ENCODE measurements at regions of chr6 and their contacts with region 1.

Region 1: DNA sequence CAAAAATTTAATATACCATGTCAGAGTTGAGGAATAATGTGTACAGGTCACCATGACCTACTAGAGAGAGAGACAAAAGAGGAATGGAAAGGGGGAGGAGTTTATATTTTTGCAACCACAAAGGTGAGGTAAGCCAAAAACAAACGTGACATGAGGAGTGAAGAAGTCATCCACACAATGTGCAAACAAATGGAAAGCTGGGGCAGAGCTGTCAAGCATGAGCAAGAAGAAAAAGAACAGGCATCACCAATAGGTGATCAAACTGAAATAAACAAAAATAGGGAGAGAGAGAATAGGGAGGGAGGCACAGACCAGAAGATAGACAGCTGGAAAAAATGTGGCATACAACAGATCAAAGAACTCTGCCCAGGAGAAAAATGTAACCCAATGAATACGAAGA is 15.5 kb downstream of the RARS2 start:
- DNase-seq: no peak
- H3K4me3 ChIP-seq: no peak overlapping the region
- H3K27ac ChIP-seq: no peak overlapping the region
- H3K27me3 ChIP-seq: no peaks in the 10 kb centered on the region
- CTCF ChIP-seq: no peak

Region 2: GRCh38 chr6:87483929-87484328 is 90.4 kb before region 1 on chr6:
- CTCF ChIA-PET with region 1: no interaction called
- POLR2A ChIA-PET with region 1: no interaction called
- DNase-seq: no peak
- H3K4me3 ChIP-seq: no peak overlapping the region
- H3K27ac ChIP-seq: no peak overlapping the region
- H3K27me3 ChIP-seq: no peaks in the 10 kb centered on the region
- CTCF ChIP-seq: no peak

Region 3: GRCh38 chr6:87551799-87552198 is 22.5 kb before region 1 on chr6:
- CTCF ChIA-PET with region 1: no interaction called
- POLR2A ChIA-PET with region 1: no interaction called
- DNase-seq: no peak
- H3K4me3 ChIP-seq: no peak overlapping the region
- H3K27ac ChIP-seq: no peak overlapping the region
- H3K27me3 ChIP-seq: no peaks in the 10 kb centered on the region
- CTCF ChIP-seq: no peak

Region 4: DNA sequence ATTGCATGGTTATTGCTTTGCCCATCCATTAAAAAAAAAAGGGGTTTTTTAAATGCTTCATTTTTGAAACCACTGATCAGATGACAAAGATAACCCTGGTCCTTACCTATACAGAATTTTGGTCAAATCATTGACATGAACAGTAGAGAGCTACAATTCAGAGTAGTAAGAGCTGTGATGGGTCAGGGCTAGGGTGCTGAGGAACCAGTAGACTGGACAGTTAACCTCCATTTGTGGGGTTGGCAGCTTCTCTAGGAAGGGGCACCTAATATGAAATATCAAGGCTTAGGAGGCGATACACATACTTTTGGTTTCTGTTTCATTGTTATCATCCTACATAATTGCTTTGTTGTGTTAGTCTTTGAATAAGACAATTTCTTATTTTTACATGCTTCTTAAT is 70.8 kb after region 1 on chr6:
- CTCF ChIA-PET with region 1: no interaction called
- POLR2A ChIA-PET with region 1: no interaction called
- DNase-seq: no peak
- H3K4me3 ChIP-seq: no peak overlapping the region
- H3K27ac ChIP-seq: no peak overlapping the region
- H3K27me3 ChIP-seq: no peaks in the 10 kb centered on the region
- CTCF ChIP-seq: no peak

Region 5: DNA sequence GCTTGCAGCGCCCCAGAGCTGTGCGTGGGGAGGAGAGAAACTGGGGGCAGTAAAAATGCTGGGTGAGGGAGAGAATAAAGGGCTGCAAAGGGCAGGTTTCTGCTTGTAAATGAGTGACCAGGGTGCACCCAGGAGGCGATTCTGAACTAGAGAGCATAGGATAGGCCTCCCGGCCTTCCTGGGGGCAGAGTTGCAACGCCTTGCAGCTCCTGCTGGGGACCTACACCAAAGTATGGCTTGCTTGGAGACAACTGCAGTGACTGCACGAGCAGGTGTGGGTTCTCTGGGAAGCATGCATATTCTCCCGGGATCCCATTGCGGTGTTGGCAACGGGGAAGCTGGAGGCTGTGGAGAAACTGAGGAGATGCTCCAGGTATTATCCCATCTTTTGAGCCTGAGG is 361.8 kb after region 1 on chr6:
- CTCF ChIA-PET with region 1: no interaction called
- POLR2A ChIA-PET with region 1: interaction called, 11 read pairs
- DNase-seq: no peak
- H3K4me3 ChIP-seq: no peak overlapping the region
- H3K27ac ChIP-seq: no peak overlapping the region
- H3K27me3 ChIP-seq: peaks cover 4% of the 10 kb centered on the region
- CTCF ChIP-seq: no peak

Measured in AG04450 (cell line).